Mammary epithelial cell (primary cell): ENCODE measurements at regions of chr20 and their contacts with region 1.

Region 1: GRCh38 chr20:17536944-17537444 is 5.8 kb upstream of the BFSP1 start:
- DNase-seq: peak; percentile 66
- H3K4me3 ChIP-seq: no peak overlapping the region
- H3K27ac ChIP-seq: no peak overlapping the region
- H3K4me1 ChIP-seq: peaks cover 8% of the 10 kb centered on the region
- H3K27me3 ChIP-seq: no peaks in the 10 kb centered on the region
- CTCF ChIP-seq: peak; percentile 88 to 96

Region 2: DNA sequence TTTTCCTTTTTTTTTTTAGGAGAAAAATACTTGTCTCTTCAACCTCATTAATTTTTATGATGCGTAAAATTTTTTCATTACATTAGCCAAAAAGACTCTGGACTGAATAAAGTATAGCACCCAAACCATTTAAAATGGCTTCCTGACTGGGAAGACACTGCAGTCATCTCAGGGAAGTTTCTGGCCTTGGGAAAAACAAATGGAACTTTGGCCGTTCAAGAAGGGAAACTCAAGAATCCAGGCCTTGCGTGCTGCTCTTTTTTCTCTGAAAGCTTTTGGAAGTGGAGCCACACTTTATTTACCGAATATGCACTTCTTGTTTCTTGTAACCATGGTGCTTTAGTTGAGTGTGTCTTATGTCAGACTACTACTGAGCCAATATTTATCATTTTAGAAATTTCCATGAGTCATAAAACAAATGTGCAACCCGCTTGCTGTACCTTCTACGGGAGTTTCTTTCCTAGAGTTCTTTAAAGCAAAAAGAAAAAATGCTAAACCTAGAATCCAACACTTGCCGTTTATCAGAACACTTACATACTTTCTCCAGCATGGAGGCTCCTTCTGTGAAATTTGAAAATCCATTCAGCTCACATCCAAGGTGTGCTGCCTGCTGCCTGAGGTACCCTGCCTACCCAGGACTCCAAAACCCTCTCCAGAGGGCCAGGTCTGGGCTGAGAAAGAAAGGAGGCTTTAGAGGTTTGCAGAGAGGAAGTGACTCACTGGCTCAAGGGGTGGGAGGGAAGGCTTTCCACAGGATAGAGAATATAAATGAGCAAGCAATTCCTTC is 21.4 kb after region 1 on chr20:
- CTCF ChIA-PET with region 1: no interaction called
- dilution Hi-C with region 1: no loop called
- in situ Hi-C with region 1: no loop called
- intact Hi-C with region 1: loop called (anchors 1 kb)
- DNase-seq: peak; percentile 88
- H3K4me3 ChIP-seq: peak overlapping the region; percentile 31 to 44 (median 37)
- H3K27ac ChIP-seq: peak overlapping the region; percentile 100
- H3K4me1 ChIP-seq: peaks cover 41% of the 10 kb centered on the region
- H3K27me3 ChIP-seq: no peaks in the 10 kb centered on the region
- CTCF ChIP-seq: no peak

Region 3: DNA sequence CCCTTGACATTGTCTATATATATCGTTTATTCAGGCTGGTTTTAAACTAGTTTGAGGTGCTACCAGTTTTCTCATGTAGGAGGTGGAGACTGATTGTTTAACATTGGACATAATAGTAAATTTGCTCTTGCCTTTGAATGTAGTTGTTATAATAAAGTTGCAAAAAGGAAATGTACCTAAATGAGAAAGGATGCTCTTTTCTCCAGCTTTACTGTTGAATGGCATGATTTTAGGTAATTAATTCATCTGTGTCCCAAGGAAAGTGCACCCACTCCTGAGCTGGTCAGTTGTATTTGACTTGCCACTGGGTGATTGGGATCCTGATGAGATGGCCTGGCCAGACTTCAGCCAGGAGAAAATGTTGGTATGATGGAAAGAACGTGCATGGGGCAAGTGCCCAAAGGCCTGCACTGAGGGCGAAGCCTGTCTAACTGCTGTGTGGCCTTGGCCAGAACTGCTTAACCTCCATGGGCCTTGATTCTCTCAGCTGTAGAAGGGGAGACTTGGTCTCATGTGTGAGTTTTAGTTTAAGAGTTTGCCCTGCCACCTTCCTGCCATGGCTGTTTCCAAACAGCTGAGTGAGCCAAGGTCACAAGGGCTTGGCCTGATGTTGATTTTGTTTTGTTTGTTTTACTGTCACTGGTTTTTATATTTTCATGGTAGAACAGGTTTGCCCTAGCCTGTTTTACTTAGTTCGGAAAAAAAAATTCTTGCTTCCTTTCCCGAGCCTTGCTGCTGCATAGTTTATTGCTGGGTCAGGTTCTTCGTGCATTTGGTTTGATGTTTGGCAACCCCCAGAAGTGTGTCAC is 68.1 kb after region 1 on chr20:
- CTCF ChIA-PET with region 1: no interaction called
- dilution Hi-C with region 1: no loop called
- in situ Hi-C with region 1: loop called in 1 of 2 experiments (anchors 10 kb)
- intact Hi-C with region 1: no loop called
- DNase-seq: no peak
- H3K4me3 ChIP-seq: no peak overlapping the region
- H3K27ac ChIP-seq: no peak overlapping the region
- H3K4me1 ChIP-seq: peaks cover 2% of the 10 kb centered on the region
- H3K27me3 ChIP-seq: no peaks in the 10 kb centered on the region
- CTCF ChIP-seq: no peak

Region 4: GRCh38 chr20:17617551-17618223 is 80.7 kb after region 1 on chr20:
- CTCF ChIA-PET with region 1: no interaction called
- dilution Hi-C with region 1: no loop called
- in situ Hi-C with region 1: no loop called
- intact Hi-C with region 1: loop called (anchors 1 kb)
- DNase-seq: no peak
- H3K4me3 ChIP-seq: no peak overlapping the region
- H3K27ac ChIP-seq: no peak overlapping the region
- H3K4me1 ChIP-seq: peaks cover under 1% of the 10 kb centered on the region
- H3K27me3 ChIP-seq: no peaks in the 10 kb centered on the region
- CTCF ChIP-seq: peak; percentile 42 to 67

Region 5: DNA sequence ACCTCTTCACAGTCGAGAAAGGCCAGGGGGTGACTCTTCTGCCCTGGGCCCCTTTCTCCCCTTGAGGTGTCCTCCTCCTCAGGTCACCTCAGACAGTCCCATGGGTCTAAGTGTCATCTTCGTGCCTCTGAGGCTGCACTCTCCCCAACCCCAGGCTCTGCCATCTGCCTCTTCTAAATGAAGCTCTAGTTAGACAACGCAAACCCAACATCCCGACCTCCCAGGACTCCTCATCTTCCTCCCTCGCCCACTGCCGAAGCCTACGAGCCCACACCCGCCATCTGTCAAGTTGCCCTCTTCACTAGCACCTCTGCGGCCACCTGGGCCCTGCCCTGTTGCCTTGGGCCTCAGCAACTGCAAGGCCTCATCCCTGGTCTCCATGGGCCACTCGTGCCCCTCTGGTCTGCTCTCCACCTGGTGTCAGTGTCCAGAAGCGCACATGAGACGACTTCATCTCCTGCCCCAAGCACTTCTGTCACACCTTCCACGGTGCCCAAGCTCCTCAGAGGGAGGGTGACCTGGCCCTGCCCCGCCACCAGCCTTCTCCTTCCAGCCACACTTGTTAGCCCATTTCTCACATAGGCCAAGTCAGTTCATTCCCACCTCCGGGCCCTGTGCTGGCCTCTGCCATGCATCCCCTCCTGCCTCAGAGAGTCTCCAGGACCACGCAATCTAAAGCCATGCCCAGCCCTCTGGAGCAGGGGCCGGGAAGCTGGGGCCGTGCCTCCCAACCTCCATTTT is 91.3 kb after region 1 on chr20:
- CTCF ChIA-PET with region 1: no interaction called
- dilution Hi-C with region 1: no loop called
- in situ Hi-C with region 1: no loop called
- intact Hi-C with region 1: no loop called
- DNase-seq: no peak
- H3K4me3 ChIP-seq: no peak overlapping the region
- H3K27ac ChIP-seq: no peak overlapping the region
- H3K4me1 ChIP-seq: no peaks in the 10 kb centered on the region
- H3K27me3 ChIP-seq: no peaks in the 10 kb centered on the region
- CTCF ChIP-seq: no peak

Region 6: DNA sequence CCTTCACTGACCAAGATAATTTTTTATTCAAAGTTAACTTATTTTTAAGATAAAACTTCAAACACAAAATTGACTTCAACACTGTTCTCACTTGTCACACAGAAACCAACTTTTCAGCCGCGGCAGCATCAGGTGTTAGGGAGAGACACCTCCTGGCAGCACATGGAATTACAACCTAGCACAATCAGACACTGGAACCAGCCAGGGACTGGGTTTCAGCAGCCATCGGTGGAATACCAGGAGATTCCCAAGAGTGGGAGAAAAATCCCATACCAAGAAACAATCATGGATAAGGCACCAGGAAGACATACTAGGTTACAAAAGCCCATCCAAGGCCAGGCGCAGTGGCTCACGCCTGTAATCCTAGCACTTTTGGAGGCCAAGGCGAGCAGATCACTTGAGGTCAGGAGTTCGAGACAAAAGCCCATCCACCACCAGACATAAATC is 361.6 kb after region 1 on chr20:
- CTCF ChIA-PET with region 1: no interaction called
- dilution Hi-C with region 1: no loop called
- in situ Hi-C with region 1: no loop called
- intact Hi-C with region 1: loop called (anchors 1 kb)
- DNase-seq: peak; percentile 53
- H3K4me3 ChIP-seq: no peak overlapping the region
- H3K27ac ChIP-seq: no peak overlapping the region
- H3K4me1 ChIP-seq: peaks cover 34% of the 10 kb centered on the region
- H3K27me3 ChIP-seq: no peaks in the 10 kb centered on the region
- CTCF ChIP-seq: peak; percentile 85 to 96

Region 7: DNA sequence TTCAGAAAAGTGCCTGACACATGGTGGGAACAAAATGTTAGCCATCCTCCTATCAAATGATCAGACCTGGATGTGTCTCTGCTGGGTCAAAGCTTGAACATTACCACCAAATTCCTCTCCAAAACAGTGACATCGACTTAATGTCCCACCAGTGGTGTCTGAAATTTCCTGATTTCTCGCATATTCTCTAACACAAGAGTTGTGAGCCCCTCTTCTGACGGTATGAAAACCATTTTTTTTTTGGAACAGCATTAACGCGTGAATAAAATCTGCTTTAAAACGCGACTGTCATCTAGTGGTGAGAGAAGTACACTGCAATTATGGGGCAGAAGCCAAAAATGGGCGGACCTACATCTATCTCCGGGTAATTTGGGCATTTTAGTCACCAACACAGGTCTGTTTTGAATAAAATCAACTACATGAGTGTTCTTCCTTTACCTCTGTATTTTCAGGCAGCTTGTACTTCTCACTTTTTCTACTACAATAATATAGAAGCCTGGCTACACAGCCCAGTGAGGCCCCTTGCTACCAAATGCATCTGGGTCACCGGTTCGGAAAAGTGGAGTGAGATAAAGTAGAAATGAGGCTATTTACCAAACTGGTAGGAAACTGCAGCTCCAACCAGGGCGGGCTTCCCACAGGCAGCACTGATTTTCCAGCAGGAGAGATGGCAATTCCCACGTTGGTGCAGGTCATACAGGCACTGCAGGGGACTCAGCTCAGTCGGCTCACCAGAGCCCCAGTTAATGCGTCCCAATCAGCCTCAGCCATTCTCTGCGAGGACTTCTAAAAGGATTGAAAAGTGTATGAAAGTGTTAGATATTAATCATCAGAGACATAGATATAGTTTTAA is 459.2 kb after region 1 on chr20:
- CTCF ChIA-PET with region 1: no interaction called
- dilution Hi-C with region 1: no loop called
- in situ Hi-C with region 1: no loop called
- intact Hi-C with region 1: loop called (anchors 1 kb)
- DNase-seq: peak; percentile 55
- H3K4me3 ChIP-seq: no peak overlapping the region
- H3K27ac ChIP-seq: no peak overlapping the region
- H3K4me1 ChIP-seq: peaks cover 14% of the 10 kb centered on the region
- H3K27me3 ChIP-seq: no peaks in the 10 kb centered on the region
- CTCF ChIP-seq: peak; percentile 98 to 100